ENCODE measurements at regions of chr17 and their contacts with region 1.

Region 1: DNA sequence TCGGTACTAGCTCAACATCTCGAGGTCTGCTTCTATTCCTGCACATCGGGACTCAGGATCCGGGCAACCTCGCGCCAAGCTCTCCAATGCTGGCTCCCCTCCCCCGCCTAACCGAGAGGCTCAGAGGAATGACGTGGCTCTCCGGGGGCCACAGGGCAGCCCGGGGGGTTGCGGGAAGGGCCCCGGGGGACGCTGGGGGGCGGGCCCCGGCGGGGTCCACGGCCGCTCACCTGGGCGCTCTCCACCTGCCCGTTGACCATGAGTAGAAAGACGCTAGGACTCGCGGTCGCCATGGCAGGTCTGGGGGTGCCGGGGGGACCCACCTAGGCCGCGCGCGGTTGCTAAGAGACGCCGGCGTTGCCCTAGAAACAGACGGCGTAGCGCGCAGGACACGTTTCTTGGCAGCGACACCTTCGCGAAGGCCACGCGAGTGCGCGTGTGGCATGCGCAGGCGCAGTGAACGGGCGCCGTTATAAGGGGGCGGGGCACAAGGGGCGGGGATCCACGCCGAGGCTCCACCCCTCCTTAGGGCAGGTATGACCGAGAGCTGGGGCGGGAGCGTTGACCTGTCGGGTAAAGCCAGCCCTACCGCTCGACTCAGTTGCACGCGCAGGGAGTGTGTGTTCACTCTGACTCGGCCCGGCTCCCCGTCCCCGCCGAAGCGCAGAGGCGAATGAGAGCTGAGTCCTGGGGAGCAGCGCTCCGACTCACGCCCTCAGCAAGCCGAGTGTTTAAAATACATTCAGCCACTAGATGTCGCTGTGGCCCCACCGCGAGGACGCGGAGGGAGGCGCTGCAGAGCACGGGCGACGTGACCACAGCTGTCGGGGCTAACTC is at the start of gene B9D1:
- DNase-seq: peak; percentile 93
- ATAC-seq: peak; percentile 95 to 97
- total RNA-seq, gene B9D1: 7.3 to 8.4 TPM

Region 2: GRCh38 chr17:19377602-19378392 is 15.3 kb after region 1 on chr17:
- intact Hi-C with region 1: loop called in 1 of 2 experiments (anchors 1 kb)
- DNase-seq: peak; percentile 98
- ATAC-seq: peak; percentile 96 to 97

Region 3: DNA sequence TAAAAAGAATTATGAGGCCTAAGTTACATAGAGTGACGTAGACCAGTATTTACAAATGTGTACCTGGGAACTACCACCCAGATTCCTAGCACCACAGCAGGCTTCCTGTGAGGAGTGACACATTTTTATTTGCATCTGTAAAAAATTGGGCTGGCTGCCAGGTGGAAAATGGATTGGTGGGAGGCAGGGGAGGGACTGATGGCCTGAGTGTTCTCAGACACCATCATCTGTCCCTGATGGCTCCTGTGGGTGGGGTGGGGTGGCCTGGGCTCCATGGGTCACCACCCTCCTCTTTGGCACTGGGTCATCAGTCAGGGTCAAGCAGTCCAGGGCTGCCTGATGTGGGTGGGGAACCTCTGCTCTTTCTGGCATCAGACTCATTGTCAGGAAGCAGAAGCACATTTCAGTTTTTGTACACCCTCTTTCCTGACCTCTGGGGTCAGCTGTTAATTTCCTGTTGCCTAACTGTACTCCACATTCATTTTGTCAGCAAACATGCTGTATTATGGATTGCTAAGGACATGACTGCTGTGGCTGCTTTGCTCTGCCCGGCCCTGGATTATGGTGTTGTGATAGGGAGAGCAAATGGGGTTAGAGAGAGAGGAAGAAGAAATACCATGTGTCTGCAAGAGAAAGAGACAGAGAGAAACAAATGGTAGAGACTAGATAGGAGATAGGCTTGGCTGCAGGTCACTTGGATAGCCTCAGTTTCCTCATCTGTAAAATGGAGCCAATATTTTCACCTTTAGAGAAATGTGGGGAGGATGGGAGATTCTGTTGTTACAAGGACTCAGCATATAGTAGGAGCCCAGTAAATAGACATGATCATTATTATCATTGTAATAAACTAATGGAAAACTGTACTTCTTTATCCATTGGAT is 36.0 kb after region 1 on chr17:
- intact Hi-C with region 1: no loop called
- DNase-seq: peak; percentile 72
- ATAC-seq: peak; percentile 49 to 88

Region 4: DNA sequence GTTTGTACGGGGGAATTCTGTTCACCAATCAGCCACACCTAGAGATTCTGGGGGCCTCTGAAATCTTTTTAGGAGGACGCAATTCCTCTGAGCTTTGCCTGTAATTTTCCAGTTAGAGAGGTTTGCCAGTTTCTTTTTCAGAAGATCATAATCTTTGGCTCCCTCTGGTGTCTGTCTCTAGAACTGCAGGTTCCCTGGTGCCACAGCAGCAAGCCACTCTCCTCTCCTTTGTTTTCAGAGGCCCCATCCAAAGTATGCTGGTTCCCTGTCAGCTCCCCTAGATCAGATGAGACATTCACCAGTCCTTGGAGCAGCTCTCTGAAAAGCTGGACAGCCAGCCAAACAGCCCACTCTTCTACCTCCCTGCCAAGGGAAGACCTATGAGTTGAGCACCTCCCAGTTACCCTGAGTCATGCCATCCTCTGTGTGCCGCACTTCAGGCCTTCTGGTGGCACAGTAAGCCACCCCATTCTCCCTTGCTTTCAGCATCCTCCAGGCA is 84.6 kb after region 1 on chr17:
- intact Hi-C with region 1: loop called (anchors 1 to 5 kb)
- DNase-seq: peak; percentile 49
- ATAC-seq: peak; percentile 58 to 81

Measured in left cardiac atrium (tissue), 4 donors.